Dendritic cell treated with granulocyte-macrophage colony-stimulating factor and Interleukin-4, amounts not matched to agents 40 ng/mL and 50 ng/mL, for 4 days (primary cell): ENCODE measurements at regions of chr19 and their contacts with region 1.

Region 1: GRCh38 chr19:41821003-41821735 is 23.3 kb downstream of the LYPD4 start:
- H3K4me3 Mint-ChIP-seq: no peak overlapping the region
- H3K27ac Mint-ChIP-seq: no peak overlapping the region
- H3K4me1 Mint-ChIP-seq: no peaks in the 10 kb centered on the region
- H3K27me3 Mint-ChIP-seq: peaks cover 16% of the 10 kb centered on the region

Region 2: GRCh38 chr19:41775360-41775695 is 45.8 kb before region 1 on chr19:
- intact Hi-C with region 1: no loop called
- H3K4me3 Mint-ChIP-seq: no peak overlapping the region
- H3K27ac Mint-ChIP-seq: no peak overlapping the region
- H3K4me1 Mint-ChIP-seq: peaks cover 7% of the 10 kb centered on the region
- H3K27me3 Mint-ChIP-seq: peaks cover 6% of the 10 kb centered on the region

Region 3: GRCh38 chr19:41792513-41793412 is 28.4 kb before region 1 on chr19:
- intact Hi-C with region 1: loop called (anchors 1 kb)
- H3K4me3 Mint-ChIP-seq: no peak overlapping the region
- H3K27ac Mint-ChIP-seq: no peak overlapping the region
- H3K4me1 Mint-ChIP-seq: peaks cover 47% of the 10 kb centered on the region
- H3K27me3 Mint-ChIP-seq: peaks cover 25% of the 10 kb centered on the region

Region 4: DNA sequence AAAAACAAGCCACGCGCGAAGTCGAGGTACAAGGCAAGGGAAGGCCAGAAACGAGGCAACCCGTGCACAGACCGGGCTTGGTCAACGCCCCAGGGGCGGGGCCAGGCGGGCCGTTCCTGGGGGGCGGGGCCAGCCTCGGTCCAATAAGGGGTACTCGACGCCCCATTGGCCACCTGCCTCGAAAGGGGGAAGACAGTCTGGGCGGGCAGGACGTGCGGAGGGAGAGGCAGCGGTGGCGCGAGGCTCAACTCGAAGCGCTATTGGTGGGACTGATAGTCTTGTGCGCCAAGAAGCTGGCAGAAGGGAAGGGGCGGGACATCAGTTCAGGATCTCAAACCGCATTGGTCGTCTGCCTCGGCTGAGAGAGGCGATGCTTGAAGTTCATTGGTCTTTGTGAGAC is 23.4 kb after region 1 on chr19 and contains the start of gene LYPD4:
- intact Hi-C with region 1: no loop called
- H3K4me3 Mint-ChIP-seq: no peak within 1 kb of the TSS
- H3K27ac Mint-ChIP-seq: no peak within 1 kb of the TSS
- H3K4me1 Mint-ChIP-seq: peaks cover 5% of the 10 kb centered on the region
- H3K27me3 Mint-ChIP-seq: peaks cover 17% of the 10 kb centered on the region